ENCODE measurements at regions of chr16 and their contacts with region 1.

Region 1: GRCh38 chr16:74637742-74638453 is 28.8 kb downstream of the RFWD3 start:
- DNase-seq: no peak
- ATAC-seq: no peak
- H3K4me3 Mint-ChIP-seq: no peak overlapping the region
- H3K27ac Mint-ChIP-seq: no peak overlapping the region
- H3K4me1 Mint-ChIP-seq: no peaks in the 10 kb centered on the region
- H3K27me3 Mint-ChIP-seq: no peaks in the 10 kb centered on the region

Region 2: DNA sequence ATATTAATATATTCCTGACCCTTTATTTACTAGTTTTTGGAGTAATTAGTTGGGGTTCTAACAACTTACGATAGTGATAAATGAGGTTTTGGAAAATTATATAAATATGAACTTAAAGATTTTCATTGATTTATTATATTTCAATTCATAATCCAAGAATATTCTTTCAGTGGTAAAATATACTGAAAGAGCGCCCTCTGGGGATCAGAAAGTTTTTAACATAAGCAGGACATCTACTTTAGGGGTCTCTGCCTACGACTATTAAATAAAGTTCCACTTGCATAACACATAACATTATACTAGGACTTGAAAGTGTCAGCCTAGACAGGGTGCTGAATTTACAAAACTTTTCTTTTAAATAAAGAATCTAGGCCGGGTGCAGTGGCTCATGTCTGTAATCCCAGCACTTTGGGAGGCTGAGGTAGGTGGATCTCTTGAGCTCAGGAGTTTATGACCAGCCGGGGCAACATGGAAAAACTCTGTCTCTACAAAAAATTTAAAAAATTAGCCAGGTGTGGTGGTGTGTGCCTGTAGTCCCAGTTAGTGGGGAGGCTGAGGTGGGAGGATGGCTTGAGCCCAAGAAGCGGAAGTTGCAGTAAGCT is 13.2 kb after region 1 on chr16:
- CTCF ChIA-PET with region 1: interaction called, 21 read pairs
- POLR2A ChIA-PET with region 1: interaction called, 5 read pairs
- intact Hi-C with region 1: no loop called
- DNase-seq: no peak
- ATAC-seq: no peak
- H3K4me3 Mint-ChIP-seq: no peak overlapping the region
- H3K27ac Mint-ChIP-seq: no peak overlapping the region
- H3K4me1 Mint-ChIP-seq: peaks cover 22% of the 10 kb centered on the region
- H3K27me3 Mint-ChIP-seq: no peaks in the 10 kb centered on the region